ENCODE measurements at regions of chr16 and their contacts with region 1.

Region 1: GRCh38 chr16:89602273-89602951 is 11.0 kb upstream of the DPEP1 start:
- DNase-seq: peak in 1 of 2 experiments; percentile 74
- H3K4me3 ChIP-seq: peak overlapping the region in 1 of 4 experiments; percentile 15; a peak in 2 of 8 replicates
- H3K27ac ChIP-seq: no peak overlapping the region
- H3K4me1 ChIP-seq: peaks cover 0 to 11% (median 9%) of the 10 kb centered on the region in 4 experiments; a peak in 5 of 7 replicates
- H3K27me3 ChIP-seq: no peaks in the 10 kb centered on the region; a peak in 1 of 7 replicates
- CTCF ChIP-seq: no peak
- EP300 ChIP-seq: no peak
- POLR2A ChIP-seq: peak in 1 of 2 experiments; percentile 43; a peak in 1 of 3 replicates
- RAD21 ChIP-seq: no peak

Region 2: GRCh38 chr16:89525146-89525913 is 77.1 kb before region 1 on chr16:
- CTCF ChIA-PET with region 1: no interaction called
- POLR2A ChIA-PET with region 1: no interaction called
- DNase-seq: no peak
- H3K4me3 ChIP-seq: no peak overlapping the region
- H3K27ac ChIP-seq: no peak overlapping the region
- H3K4me1 ChIP-seq: no peaks in the 10 kb centered on the region
- H3K27me3 ChIP-seq: no peaks in the 10 kb centered on the region
- CTCF ChIP-seq: no peak
- EP300 ChIP-seq: no peak
- POLR2A ChIP-seq: no peak
- RAD21 ChIP-seq: no peak

Region 3: DNA sequence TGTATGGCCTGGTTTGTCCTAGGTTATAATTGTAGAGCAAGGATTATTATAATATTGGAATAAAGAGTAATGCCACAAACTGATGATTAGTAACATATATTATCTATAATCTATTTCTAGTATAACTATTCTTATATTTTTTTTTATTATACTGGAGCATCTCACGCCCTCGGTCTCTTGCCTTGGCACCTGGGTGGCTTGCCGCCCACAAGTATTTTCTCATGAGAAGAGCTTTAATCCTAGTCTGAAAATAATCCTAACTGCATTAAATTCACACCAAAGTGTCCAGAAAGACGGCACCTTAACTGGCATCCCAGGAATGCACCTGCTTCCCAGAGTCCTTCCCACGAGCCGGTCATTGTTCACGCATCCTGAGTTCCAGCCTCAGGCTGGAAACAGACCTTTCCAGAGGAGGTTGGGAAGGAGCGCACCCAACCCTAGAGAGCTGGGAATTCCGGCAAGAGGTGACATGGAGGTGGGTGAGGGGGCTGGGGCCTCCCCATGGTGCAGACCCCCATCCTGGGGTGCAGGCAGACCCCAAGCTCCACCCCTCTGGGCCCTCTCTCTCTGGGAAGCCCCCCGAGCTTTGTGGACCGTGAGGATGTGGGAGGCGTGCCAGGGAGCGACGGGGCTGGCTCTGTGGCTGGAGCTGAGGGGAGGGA is 39.2 kb after region 1 on chr16:
- CTCF ChIA-PET with region 1: interaction called, 34 read pairs
- POLR2A ChIA-PET with region 1: interaction called, 8 read pairs
- DNase-seq: no peak
- H3K4me3 ChIP-seq: no peak overlapping the region
- H3K27ac ChIP-seq: no peak overlapping the region
- H3K4me1 ChIP-seq: no peaks in the 10 kb centered on the region
- H3K27me3 ChIP-seq: no peaks in the 10 kb centered on the region
- CTCF ChIP-seq: no peak
- EP300 ChIP-seq: no peak
- POLR2A ChIP-seq: no peak
- RAD21 ChIP-seq: no peak